ENCODE measurements at regions of chr1 and their contacts with region 1.

Region 1: GRCh38 chr1:206612129-206612876 is at the start of gene EIF2D:
- DNase-seq: peak; percentile 91
- H3K4me3 Mint-ChIP-seq: peak within 1 kb of the TSS; percentile 98
- H3K27ac Mint-ChIP-seq: peak within 1 kb of the TSS; percentile 94
- H3K4me1 Mint-ChIP-seq: peaks cover 41% of the 10 kb centered on the region
- H3K27me3 Mint-ChIP-seq: peaks cover 8% of the 10 kb centered on the region
- total RNA-seq, gene EIF2D: 89.1 and 101 TPM in 2 replicates

Region 2: GRCh38 chr1:206479183-206480125 is 132.8 kb before region 1 on chr1:
- intact Hi-C with region 1: no loop called
- DNase-seq: peak; percentile 25
- H3K4me3 Mint-ChIP-seq: no peak overlapping the region
- H3K27ac Mint-ChIP-seq: peak overlapping the region; percentile 85
- H3K4me1 Mint-ChIP-seq: peaks cover 31% of the 10 kb centered on the region
- H3K27me3 Mint-ChIP-seq: no peaks in the 10 kb centered on the region

Region 3: GRCh38 chr1:206507284-206508129 is 104.8 kb before region 1 on chr1 and contains the start of gene RASSF5:
- intact Hi-C with region 1: loop called (anchors 1 kb)
- DNase-seq: peak; percentile 82
- H3K4me3 Mint-ChIP-seq: peak within 1 kb of the TSS; percentile 78
- H3K27ac Mint-ChIP-seq: peak within 1 kb of the TSS; percentile 47
- H3K4me1 Mint-ChIP-seq: peaks cover 54% of the 10 kb centered on the region
- H3K27me3 Mint-ChIP-seq: peaks cover 17% of the 10 kb centered on the region
- total RNA-seq, gene RASSF5: 220 and 221 TPM in 2 replicates

Region 4: DNA sequence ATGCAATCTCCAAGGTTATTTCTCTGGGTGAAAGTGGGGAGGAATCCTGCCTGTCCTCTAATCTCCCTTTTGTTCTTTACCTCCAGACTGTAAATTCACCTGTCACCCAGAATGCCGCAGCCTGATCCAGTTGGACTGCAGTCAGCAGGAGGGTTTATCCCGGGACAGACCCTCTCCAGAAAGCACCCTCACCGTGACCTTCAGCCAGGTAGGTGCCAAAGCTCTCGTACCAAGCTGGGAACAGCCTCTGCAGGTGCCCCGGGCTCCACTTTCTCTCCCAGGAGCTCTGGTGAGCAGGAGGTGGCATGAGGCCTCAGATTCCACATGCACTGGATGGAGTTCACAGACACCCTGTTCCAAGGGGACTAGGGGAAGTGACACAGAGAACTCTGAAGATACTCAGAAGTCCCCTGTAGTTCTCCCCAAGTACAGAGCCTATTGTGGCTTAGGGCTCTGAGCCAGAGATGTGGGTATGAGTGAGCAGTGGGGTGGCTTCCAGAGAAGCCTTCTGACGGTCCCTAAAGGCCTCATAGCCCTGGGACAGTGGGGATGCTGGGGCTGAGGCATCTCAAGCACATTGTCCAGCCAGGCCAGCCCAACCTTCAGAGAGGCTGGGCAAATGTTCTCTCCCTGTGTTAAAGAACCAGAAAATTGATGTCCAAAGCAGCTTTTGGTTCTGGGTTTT is 74.1 kb before region 1 on chr1:
- intact Hi-C with region 1: no loop called
- DNase-seq: no peak
- H3K4me3 Mint-ChIP-seq: no peak overlapping the region
- H3K27ac Mint-ChIP-seq: no peak overlapping the region
- H3K4me1 Mint-ChIP-seq: peaks cover 12% of the 10 kb centered on the region
- H3K27me3 Mint-ChIP-seq: peaks cover 3% of the 10 kb centered on the region

Region 5: DNA sequence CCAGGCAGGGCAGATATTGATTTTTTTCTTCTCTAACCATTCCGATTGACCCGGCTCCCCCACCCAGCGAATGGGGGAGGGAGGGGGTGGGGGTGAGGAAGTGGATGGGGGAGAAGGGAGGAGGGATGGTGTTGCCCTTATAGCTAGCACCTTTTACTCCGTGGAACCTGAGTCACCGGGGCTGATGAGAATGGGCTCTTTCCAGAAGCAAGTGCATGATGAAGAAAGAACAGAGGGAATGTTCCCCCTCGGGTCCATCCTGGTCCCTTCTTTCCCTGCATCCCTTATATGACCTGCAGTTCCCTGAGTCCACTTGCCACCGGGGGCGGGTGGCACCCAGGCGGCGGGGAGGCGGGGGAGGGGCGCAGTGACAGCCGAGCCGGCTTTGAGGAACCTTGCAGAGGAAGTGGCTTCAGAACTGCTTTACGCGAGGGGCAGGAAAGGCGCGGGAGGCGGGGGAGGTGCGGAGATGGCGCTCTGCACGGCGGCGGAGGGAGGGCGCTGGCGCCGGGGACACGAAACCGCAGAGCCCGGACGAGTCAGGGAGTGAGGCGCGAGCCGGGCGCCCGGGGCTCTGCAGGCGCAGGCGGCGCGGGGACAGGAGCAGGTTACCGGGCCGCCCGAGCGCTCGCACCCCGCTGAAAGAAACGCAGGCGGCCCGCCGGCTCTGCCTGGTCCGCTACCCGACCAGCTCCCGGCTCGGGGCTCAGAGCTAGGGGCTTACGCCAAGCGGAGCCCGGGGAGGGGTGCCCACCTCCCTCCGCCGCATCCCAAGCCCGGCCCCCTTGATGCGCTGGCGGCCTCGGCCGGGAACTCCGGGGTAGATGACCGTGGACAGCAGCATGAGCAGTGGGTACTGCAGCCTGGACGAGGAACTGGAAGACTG is 55.3 kb before region 1 on chr1:
- intact Hi-C with region 1: loop called (anchors 1 kb)
- DNase-seq: peak; percentile 86
- H3K4me3 Mint-ChIP-seq: peak overlapping the region; percentile 98
- H3K27ac Mint-ChIP-seq: peak overlapping the region; percentile 98
- H3K4me1 Mint-ChIP-seq: peaks cover 73% of the 10 kb centered on the region
- H3K27me3 Mint-ChIP-seq: no peaks in the 10 kb centered on the region

Region 6: DNA sequence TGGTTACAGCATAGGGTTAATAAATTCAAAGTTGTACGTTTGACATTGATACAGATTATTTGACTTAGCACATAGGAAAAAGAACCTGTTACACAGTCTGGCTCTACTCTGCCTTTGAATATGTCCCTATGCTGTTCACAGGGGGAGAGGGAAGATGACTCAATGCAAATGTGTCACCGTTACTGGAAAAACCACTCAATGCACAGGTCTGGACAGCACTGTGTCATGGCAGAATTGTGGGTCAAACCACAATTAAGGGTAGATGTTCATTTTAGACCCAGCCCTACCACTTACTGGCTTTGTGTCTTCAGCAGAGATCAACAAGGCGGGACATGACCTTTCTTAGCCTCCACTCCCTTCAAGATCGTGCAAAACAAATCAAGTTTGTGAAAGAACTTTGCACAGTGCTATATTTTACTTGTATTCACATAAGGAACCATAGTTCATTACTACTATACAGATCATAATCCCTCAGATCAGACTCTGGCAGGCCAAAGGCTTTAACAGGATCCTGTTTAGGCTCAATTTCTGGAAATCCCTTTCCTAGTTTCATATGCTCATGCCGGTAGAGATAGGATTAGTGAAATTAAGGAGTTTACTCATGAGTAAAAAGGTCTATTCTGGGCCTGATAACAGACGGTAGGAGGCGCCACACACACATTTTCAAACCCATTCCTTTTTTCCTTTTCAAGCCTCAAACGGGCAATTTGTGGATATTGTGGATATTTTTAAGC is 22.1 kb before region 1 on chr1:
- intact Hi-C with region 1: loop called (anchors 2 kb)
- DNase-seq: peak; percentile 70
- H3K4me3 Mint-ChIP-seq: peak overlapping the region; percentile 65
- H3K27ac Mint-ChIP-seq: peak overlapping the region; percentile 95
- H3K4me1 Mint-ChIP-seq: peaks cover 87% of the 10 kb centered on the region
- H3K27me3 Mint-ChIP-seq: no peaks in the 10 kb centered on the region

Region 7: GRCh38 chr1:206663832-206664652 is 51.7 kb after region 1 on chr1:
- intact Hi-C with region 1: loop called (anchors 1 kb)
- DNase-seq: peak; percentile 52
- H3K4me3 Mint-ChIP-seq: peak overlapping the region; percentile 71
- H3K27ac Mint-ChIP-seq: peak overlapping the region; percentile 11
- H3K4me1 Mint-ChIP-seq: peaks cover 39% of the 10 kb centered on the region
- H3K27me3 Mint-ChIP-seq: no peaks in the 10 kb centered on the region

Region 8: DNA sequence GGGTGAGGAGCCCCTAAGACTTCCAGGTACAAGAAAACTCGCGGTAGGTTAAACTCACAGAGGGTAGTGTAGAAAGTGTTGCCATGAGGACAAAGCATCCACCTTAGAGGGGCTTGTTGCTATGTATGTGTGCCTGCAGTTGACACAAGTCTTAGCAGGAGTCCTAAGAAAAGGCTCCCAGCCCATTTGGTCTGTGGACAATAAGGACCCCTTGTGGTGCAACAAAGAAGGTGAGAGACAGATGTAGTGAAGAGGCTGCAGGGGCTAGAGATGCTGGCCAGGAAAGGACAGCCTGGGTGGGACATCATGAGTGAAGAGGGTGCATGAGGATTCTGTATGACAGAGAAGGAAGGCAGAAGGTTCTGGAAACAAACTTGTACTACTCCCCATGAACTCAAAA is 196.3 kb after region 1 on chr1:
- intact Hi-C with region 1: loop called (anchors 2 kb)
- DNase-seq: peak; percentile 43
- H3K4me3 Mint-ChIP-seq: no peak overlapping the region
- H3K27ac Mint-ChIP-seq: peak overlapping the region; percentile 15
- H3K4me1 Mint-ChIP-seq: peaks cover 57% of the 10 kb centered on the region
- H3K27me3 Mint-ChIP-seq: peaks cover 13% of the 10 kb centered on the region

Region 9: DNA sequence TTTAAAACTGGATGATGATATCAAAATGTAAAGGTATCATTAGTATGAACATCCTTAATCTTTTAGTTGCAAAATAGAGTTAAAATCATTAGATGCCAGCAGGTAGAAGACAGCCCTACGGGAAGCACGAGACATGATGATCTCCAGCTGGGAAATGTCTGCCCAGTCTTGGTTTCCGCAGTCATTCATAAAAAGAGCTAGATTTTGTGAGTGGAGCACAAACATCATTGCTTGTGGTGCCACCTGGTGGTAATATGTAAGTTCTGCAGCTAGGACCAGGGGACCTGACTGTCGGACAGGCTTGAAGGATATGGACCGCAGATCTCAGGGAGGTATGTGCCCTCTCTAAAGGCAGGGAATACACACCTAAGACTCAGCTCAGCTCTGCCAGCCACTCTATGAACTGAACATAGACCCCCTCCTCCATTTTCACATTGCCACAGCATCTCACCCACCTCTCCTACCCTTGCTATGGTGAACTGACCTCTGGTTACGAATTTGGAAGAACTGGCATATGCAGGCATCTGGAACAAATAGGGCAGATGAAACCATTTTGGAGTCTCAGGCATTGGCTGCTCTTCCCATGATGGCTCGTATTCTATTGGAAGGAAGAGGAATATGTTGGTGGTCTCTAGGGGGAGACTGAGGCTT is 300.3 kb after region 1 on chr1:
- intact Hi-C with region 1: loop called (anchors 1 kb)
- DNase-seq: peak; percentile 49
- H3K4me3 Mint-ChIP-seq: no peak overlapping the region
- H3K27ac Mint-ChIP-seq: no peak overlapping the region
- H3K4me1 Mint-ChIP-seq: peaks cover 68% of the 10 kb centered on the region
- H3K27me3 Mint-ChIP-seq: peaks cover 3% of the 10 kb centered on the region

Measured in activated T-helper 1 cell treated with anti-CD3 and anti-CD28 coated beads, Interleukin-12 subunit alpha, Interleukin-12 subunit beta, Interleukin-2, Interleukin-4 antibody, amounts not matched to agents 30 ng/mL and 10 ng/mL and 1 ng/mL, durations not matched to agents 14 hours and 24 hours and 36 hours (primary cell).